K562 (cell line): ENCODE measurements at regions of chr2 and their contacts with region 1.

Region 1: GRCh38 chr2:5365871-5366461 is 326.2 kb upstream of the SOX11 start:
- DNase-seq: peak; percentile 68 to 78 (median 72)
- ATAC-seq: peak; percentile 96
- H3K4me3 ChIP-seq: no peak overlapping the region
- H3K27ac ChIP-seq: no peak overlapping the region
- H3K4me1 ChIP-seq: no peaks in the 10 kb centered on the region
- H3K27me3 ChIP-seq: no peaks in the 10 kb centered on the region
- CTCF ChIP-seq: peak; percentile 54 to 76 (median 63)
- EP300 ChIP-seq: no peak
- POLR2A ChIP-seq: no peak
- RAD21 ChIP-seq: peak; percentile 39 to 66; a peak in 3 of 4 replicates

Region 2: GRCh38 chr2:3959372-3959771 is 1406.6 kb before region 1 on chr2:
- CTCF ChIA-PET with region 1: no interaction called
- POLR2A ChIA-PET with region 1: no interaction called
- in situ Hi-C with region 1: no loop called
- intact Hi-C with region 1: loop called (anchors 1 kb)
- DNase-seq: peak; percentile 33 to 50 (median 45)
- ATAC-seq: peak; percentile 44; the same call in 2 of the 3 replicates
- H3K4me3 ChIP-seq: no peak overlapping the region
- H3K27ac ChIP-seq: no peak overlapping the region
- H3K4me1 ChIP-seq: no peaks in the 10 kb centered on the region
- H3K27me3 ChIP-seq: no peaks in the 10 kb centered on the region
- CTCF ChIP-seq: peak; percentile 32 to 80 (median 67); a peak in 5 of 6 replicates
- EP300 ChIP-seq: no peak
- POLR2A ChIP-seq: no peak
- RAD21 ChIP-seq: peak; percentile 52 to 53

Region 3: DNA sequence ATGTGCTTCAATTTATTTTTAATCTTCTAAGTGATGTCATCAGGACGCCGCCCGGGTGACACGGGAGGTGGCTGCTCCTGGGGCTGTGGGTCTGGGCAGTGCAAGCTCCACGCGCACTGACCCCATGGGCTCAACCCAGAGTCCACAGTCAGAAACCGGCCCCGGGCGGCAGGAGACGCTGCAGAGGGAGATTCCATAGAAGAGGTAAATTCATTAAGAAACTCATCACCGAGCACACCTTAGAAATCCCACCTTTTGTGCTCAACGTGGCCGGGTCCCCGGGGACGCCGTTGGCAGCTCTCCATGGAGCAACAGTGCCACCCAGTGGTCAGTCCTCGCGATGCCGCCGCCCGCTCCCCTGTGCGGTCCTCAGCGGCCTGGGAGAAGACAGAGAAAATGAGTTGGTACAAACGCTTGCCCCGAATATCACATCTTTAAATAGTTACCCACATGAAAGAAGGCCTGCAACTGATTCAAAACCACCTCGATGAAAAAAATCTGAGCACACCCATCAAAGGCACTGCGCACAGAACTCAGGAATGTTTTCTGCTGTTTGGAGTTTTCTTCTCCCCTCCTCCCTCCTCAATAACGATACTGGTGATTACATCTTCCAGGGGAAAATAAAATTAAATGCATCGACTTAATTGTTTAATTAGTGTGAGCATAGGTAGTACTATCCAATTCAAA is 1407.2 kb after region 1 on chr2:
- CTCF ChIA-PET with region 1: no interaction called
- POLR2A ChIA-PET with region 1: no interaction called
- in situ Hi-C with region 1: no loop called
- intact Hi-C with region 1: loop called (anchors 10 kb)
- DNase-seq: peak; percentile 63 to 87 (median 82)
- ATAC-seq: peak; percentile 98
- H3K4me3 ChIP-seq: no peak overlapping the region
- H3K27ac ChIP-seq: no peak overlapping the region
- H3K4me1 ChIP-seq: peaks cover 0 to 6% of the 10 kb centered on the region in 2 experiments; a peak in 1 of 5 replicates
- H3K27me3 ChIP-seq: peaks cover 0 to 15% of the 10 kb centered on the region in 2 experiments; a peak in 2 of 5 replicates
- CTCF ChIP-seq: peak; percentile 81 to 91 (median 87)
- EP300 ChIP-seq: no peak
- POLR2A ChIP-seq: no peak
- RAD21 ChIP-seq: peak; percentile 86 to 93